ENCODE measurements at regions of chr12 and their contacts with region 1.

Region 1: DNA sequence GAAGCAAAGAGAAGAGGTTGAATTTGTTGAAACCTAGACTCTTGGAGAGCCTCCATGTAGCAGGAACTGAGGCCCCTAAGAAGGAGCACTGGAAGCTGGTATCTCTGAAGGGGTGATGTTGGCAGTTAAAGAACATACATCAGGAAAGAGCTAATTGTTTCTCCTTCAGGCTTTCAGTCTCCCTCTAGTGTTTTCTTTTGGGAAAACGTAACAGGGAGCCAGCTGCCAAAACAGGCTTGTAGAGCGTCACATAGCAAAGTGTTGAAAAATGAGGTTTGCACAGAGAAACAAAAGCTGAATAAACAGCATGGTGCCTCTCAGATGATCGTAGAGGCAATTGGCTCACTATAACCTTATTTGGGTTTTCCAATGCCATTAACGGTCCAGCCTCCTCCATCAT is 46.9 kb upstream of the CAND1 start:
- DNase-seq: no peak
- ATAC-seq: no peak
- H3K4me3 ChIP-seq: no peak overlapping the region
- H3K27ac ChIP-seq: no peak overlapping the region
- H3K4me1 ChIP-seq: no peaks in the 10 kb centered on the region
- H3K27me3 ChIP-seq: no peaks in the 10 kb centered on the region
- CTCF ChIP-seq: peak in 8 of 12 donors; percentile 8 to 35 (median 15)
- POLR2A ChIP-seq: no peak

Region 2: GRCh38 chr12:66688846-66689439 is 533.4 kb before region 1 on chr12:
- intact Hi-C with region 1: loop called in 2 of 10 experiments (anchors 5 to 10 kb)
- DNase-seq: peak in 3 of 5 donors; percentile 14 to 29 (median 27)
- ATAC-seq: peak in 3 of 4 donors; percentile 63 to 77 (median 71)
- H3K4me3 ChIP-seq: no peak overlapping the region
- H3K27ac ChIP-seq: no peak overlapping the region
- H3K4me1 ChIP-seq: no peaks in the 10 kb centered on the region
- H3K27me3 ChIP-seq: peaks cover 0 to 4% (median 0%) of the 10 kb centered on the region in 9 donors
- CTCF ChIP-seq: peak; percentile 21 to 59 (median 42)
- POLR2A ChIP-seq: no peak

Region 3: DNA sequence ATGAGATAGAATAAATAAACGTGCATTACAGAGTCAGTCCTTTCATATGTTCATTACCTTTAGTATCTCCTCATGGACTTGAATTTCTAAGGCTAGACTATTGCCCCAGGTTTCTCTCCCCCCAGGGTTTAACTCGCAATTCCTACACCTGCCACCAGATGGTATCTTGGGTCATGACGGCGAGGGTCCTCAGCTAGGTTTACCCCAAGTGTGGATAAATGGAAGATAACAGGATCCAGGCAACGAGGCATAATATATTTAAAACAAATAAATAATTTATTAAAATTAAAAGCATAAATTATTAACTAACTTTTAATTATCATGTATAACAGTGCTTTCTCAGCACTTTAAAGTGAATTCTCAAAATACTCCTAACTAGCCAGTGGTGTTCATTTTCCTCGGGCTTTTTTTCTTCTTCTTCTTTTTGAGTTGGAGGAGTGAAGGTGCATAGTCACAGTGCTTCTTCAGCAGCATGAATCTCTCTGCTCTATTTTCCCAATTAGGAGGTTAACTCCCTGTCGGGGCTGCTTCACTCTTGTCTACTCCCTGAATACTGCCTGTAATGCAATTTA is 196.7 kb before region 1 on chr12:
- intact Hi-C with region 1: loop called in 7 of 10 experiments (anchors 2 to 10 kb)
- DNase-seq: no peak
- ATAC-seq: no peak
- H3K4me3 ChIP-seq: no peak overlapping the region
- H3K27ac ChIP-seq: no peak overlapping the region
- H3K4me1 ChIP-seq: no peaks in the 10 kb centered on the region
- H3K27me3 ChIP-seq: peaks cover 0 to 14% (median 0%) of the 10 kb centered on the region in 9 donors
- CTCF ChIP-seq: peak; percentile 39 to 65 (median 55)
- POLR2A ChIP-seq: no peak

Region 4: DNA sequence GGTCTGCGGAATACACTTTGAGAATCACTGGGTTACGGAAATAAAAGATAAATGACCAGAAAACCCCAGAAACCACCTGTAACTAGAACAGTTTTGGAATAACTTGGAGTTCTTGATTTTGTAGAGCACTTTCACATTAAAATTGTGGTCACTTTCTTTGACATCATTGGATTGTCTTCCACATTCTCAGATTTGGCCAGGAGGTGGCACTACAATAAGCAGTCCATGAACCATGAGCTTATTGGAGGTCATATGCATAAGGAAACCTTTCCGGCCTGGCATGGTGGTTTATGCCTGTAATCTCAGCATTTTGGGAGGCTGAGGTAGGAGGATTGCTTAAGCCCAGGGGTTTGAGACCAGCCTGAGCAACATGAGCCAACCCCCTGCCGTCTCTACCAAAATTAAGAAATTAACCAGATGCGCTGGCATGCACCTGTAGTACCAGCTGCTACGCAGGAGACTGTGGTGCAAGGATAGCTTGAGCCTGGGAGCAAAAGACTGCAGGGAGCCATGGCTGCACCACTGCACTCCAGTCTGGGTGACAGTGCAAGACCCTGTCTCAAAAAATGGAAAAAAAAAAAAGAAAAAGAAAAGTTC is 60.9 kb before region 1 on chr12:
- intact Hi-C with region 1: loop called in 2 of 10 experiments (anchors 5 kb)
- DNase-seq: no peak
- ATAC-seq: peak in 1 of 4 donors; percentile 42
- H3K4me3 ChIP-seq: no peak overlapping the region
- H3K27ac ChIP-seq: no peak overlapping the region
- H3K4me1 ChIP-seq: no peaks in the 10 kb centered on the region
- H3K27me3 ChIP-seq: peaks cover 0 to 2% (median 0%) of the 10 kb centered on the region in 9 donors
- CTCF ChIP-seq: peak; percentile 16 to 57 (median 38)
- POLR2A ChIP-seq: no peak

Region 5: DNA sequence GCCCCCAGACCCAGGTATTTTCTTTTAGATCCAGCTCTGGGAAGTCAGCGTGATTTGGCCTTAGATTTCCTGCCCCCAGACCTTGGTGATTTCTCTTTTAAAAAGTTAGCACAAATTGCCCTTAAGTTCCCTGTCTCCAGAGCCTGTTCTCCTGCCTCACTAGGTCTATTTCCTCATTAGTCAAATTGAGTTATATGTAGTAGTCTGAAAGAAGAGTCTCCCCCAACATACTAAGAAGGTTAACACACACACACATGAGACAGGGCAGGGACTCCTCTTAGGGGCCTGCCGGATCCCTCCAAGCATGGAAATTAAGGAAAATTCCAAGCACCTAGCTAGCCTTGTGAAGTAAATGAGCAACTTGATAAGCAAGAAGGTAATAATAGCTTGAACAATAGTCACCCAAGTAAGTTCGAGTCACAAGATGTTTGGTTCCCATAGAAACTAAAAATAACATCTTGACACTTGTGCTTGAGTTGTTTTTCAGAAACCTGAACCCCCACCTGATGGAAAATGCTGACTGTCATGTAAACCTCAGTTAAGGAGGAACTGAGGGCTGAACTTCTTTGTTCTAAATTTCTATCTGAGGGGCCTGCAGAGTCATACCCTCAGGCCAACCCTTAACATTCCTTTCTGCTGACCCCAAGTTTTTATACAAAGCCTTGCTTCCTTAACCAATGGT is 98.5 kb after region 1 on chr12:
- intact Hi-C with region 1: no loop called
- DNase-seq: no peak
- ATAC-seq: no peak
- H3K4me3 ChIP-seq: no peak overlapping the region
- H3K27ac ChIP-seq: no peak overlapping the region
- H3K4me1 ChIP-seq: no peaks in the 10 kb centered on the region
- H3K27me3 ChIP-seq: no peaks in the 10 kb centered on the region
- CTCF ChIP-seq: no peak
- POLR2A ChIP-seq: no peak